Gastrocnemius medialis (tissue), 4 donors: ENCODE measurements at regions of chr5 and their contacts with region 1.

Region 1: GRCh38 chr5:138575194-138576015 is at the start of gene HSPA9:
- DNase-seq: peak; percentile 98 to 99
- ATAC-seq: peak; percentile 95 to 96
- H3K4me3 ChIP-seq: peak within 1 kb of the TSS; percentile 79 to 97 (median 91)
- H3K27ac ChIP-seq: peak within 1 kb of the TSS; percentile 97 to 99 (median 98)
- H3K4me1 ChIP-seq: peaks cover 12 to 22% of the 10 kb centered on the region in 2 donors
- H3K27me3 ChIP-seq: no peaks in the 10 kb centered on the region
- CTCF ChIP-seq: peak in 3 of 5 experiments; percentile 27 to 61 (median 42)
- POLR2A ChIP-seq: peak; percentile 95 to 98
- total RNA-seq, gene HSPA9: 449 to 840 (median 569) TPM

Region 2: GRCh38 chr5:137754126-137754960 is 821.1 kb before region 1 on chr5 and contains the start of gene HNRNPA0:
- in situ Hi-C with region 1: no loop called
- intact Hi-C with region 1: loop called (anchors 5 kb)
- DNase-seq: peak; percentile 96 to 97
- ATAC-seq: peak; percentile 92 to 95
- H3K4me3 ChIP-seq: peak within 1 kb of the TSS; percentile 80 to 98 (median 96)
- H3K27ac ChIP-seq: peak within 1 kb of the TSS; percentile 98 to 100 (median 100)
- H3K4me1 ChIP-seq: peaks cover 28 to 31% of the 10 kb centered on the region in 2 donors
- H3K27me3 ChIP-seq: no peaks in the 10 kb centered on the region
- CTCF ChIP-seq: peak in 2 of 5 experiments; percentile 19 to 26
- POLR2A ChIP-seq: peak; percentile 96 to 99
- total RNA-seq, gene HNRNPA0: 4.2 to 6.0 (median 5.2) TPM

Region 3: GRCh38 chr5:138542956-138543729 is 32.3 kb before region 1 on chr5 and contains the start of gene ETF1:
- in situ Hi-C with region 1: no loop called
- intact Hi-C with region 1: loop called (anchors 1 kb)
- DNase-seq: peak; percentile 100
- ATAC-seq: peak; percentile 86 to 87
- H3K4me3 ChIP-seq: peak within 1 kb of the TSS; percentile 85 to 98 (median 96)
- H3K27ac ChIP-seq: peak within 1 kb of the TSS; percentile 97 to 100 (median 98)
- H3K4me1 ChIP-seq: peaks cover 72 to 73% of the 10 kb centered on the region in 2 donors
- H3K27me3 ChIP-seq: no peaks in the 10 kb centered on the region
- CTCF ChIP-seq: peak in 1 of 5 experiments; percentile 17
- POLR2A ChIP-seq: peak; percentile 100
- total RNA-seq, gene ETF1: 99.9 to 139 (median 117) TPM

Region 4: DNA sequence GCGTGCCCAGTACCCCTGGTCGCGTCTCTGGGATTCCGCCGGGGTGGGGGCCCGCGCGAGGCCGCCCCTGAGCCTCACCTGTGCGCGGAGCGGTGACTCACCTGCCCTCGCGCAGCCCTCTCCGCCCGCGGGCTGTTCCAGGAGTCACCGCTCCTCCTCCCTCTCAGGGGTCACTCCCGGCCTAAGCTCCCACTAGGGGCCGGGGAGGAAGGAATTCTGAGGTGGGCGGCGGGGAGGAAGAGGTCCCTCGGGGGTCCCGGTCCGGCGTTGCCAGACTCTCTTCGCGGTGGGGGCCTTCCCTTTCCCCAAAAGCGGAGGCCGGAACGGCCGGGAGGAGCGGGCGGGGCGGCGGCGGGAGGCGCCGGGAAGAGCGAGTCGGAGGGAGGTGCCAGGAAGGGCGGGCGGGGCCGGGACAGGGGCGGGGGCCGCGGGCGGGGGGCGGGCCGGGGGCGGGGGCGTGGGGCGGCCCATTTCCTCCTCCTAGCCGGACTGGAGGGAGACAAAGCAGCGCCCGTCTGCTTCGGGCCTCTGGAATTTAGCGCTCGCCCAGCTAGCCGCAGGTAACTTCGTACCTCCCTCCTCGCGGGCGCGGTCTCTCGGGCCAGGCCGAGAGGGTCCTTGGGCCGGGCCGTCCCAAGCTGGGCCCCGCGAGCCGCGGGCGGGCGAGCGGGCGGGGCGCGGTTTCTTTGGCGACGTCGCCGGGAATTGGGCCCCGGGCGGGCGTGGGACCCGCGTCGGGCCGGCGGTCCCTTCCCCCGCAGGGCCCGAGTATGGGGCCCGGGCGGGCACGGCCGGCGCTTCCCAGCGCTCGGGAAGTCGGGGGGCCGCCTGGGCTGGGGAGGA is 177.8 kb after region 1 on chr5 and contains the start of gene CTNNA1:
- in situ Hi-C with region 1: no loop called
- intact Hi-C with region 1: loop called (anchors 2 kb)
- DNase-seq: peak; percentile 66 to 80
- ATAC-seq: peak; percentile 85 to 87
- H3K4me3 ChIP-seq: peak within 1 kb of the TSS; percentile 75 to 94 (median 79)
- H3K27ac ChIP-seq: peak within 1 kb of the TSS; percentile 87 to 100 (median 96)
- H3K4me1 ChIP-seq: peaks cover 13 to 22% of the 10 kb centered on the region in 2 donors
- H3K27me3 ChIP-seq: no peaks in the 10 kb centered on the region
- CTCF ChIP-seq: peak in 1 of 5 experiments; percentile 11
- POLR2A ChIP-seq: peak; percentile 76 to 84
- total RNA-seq, gene CTNNA1: 92.6 to 164 (median 114) TPM

Region 5: DNA sequence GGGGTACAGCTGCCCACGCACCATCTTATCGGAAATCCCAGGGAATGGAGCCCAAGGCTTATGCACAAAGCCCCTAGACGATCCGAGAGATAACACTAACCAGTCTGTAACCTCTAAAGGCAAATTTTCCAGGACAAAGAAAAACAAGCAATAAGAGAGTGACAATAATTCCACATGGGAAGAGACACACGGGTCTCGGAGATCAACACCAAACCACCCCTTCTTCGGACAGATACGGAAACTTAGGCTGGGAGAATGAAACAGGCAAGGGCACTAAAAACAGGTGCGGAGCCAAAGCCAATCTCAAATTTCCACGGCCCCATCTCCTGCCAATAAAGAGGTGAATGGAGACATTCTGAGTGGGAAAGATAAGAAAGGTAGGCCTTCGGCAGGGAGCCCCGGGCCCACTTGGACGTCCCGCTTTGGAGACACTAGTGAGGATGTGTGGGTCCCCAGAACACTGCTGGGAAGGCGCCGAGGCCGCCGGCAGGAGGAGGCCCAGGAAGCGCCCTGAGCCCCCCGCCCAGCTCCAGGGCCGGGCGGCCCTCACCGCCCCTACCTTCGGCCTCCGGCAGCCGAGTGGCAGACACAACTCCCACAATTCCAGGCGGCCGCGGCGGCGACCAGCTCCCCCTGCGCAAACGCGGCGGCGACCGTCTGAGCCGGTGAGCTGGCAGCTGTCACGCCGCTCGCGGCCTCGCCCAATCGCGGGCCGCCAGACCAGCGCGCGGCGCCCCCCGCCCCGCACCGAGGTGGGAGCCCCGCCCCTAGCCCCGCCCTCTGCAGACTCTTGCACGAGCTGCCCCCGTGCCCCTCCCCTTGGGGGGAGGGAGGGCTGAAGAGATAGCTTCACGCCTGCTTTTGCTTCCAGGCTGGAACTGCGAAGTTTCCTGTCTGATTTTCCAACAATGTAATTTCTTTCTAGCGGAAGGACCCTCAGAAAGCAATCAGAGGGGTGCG is 622.6 kb after region 1 on chr5 and contains the start of gene SIL1:
- in situ Hi-C with region 1: no loop called
- intact Hi-C with region 1: loop called (anchors 1 kb)
- DNase-seq: peak; percentile 95 to 97
- ATAC-seq: peak; percentile 91 to 93
- H3K4me3 ChIP-seq: peak within 1 kb of the TSS; percentile 78 to 89 (median 83)
- H3K27ac ChIP-seq: peak within 1 kb of the TSS; percentile 94 to 98 (median 97)
- H3K4me1 ChIP-seq: peaks cover 11 to 16% of the 10 kb centered on the region in 2 donors
- H3K27me3 ChIP-seq: no peaks in the 10 kb centered on the region
- CTCF ChIP-seq: peak in 1 of 5 experiments; percentile 13
- POLR2A ChIP-seq: peak; percentile 99
- total RNA-seq, gene SIL1: 36.6 to 52.6 (median 48.2) TPM

Region 6: DNA sequence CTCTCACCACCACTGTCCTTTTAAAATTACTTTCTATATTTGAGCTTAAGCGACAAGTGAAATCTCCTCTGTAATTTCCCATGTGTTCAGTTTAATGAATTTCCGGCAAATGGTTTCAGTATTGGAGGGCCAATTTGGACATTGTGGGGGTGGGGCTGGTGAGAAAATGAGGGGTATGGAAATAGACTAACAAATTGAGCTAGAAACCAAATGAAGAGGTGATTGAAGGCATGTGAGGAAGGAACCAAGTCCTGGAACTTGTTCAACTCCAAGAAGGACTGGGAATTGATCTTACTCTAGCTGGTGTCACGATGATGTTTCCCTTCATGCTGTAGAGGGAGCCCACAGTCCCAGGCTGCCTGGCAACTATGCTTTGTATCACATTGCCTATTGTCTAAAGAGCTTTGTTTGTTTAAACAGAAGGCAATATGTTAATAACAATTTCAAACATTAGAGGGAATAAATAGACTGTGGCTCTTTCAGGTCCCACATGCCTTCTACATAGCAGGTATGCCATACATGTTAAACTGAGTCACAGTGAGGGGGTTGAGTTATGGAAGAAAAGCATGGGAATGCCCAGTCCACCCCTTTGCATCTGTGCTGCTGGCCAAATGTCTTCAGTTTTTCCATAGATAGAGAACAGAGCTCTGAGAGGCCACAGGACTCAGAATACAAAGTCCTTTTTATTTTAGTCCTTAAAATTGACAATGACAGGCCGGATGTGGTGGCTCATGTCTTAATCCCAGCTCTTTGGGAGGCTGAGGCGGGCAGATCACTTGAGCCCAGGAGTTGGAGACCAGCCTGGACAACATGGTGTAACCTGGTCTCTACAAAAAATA is 693.2 kb after region 1 on chr5:
- in situ Hi-C with region 1: loop called (anchors 5 to 25 kb)
- intact Hi-C with region 1: loop called (anchors 1 kb)
- DNase-seq: no peak
- ATAC-seq: no peak
- H3K4me3 ChIP-seq: peak overlapping the region in 2 of 4 donors; percentile 9 to 10
- H3K27ac ChIP-seq: peak overlapping the region; percentile 92 to 98 (median 97)
- H3K4me1 ChIP-seq: peaks cover 41 to 46% of the 10 kb centered on the region in 2 donors
- H3K27me3 ChIP-seq: no peaks in the 10 kb centered on the region
- CTCF ChIP-seq: peak in 1 of 5 experiments; percentile 6
- POLR2A ChIP-seq: no peak

Region 7: DNA sequence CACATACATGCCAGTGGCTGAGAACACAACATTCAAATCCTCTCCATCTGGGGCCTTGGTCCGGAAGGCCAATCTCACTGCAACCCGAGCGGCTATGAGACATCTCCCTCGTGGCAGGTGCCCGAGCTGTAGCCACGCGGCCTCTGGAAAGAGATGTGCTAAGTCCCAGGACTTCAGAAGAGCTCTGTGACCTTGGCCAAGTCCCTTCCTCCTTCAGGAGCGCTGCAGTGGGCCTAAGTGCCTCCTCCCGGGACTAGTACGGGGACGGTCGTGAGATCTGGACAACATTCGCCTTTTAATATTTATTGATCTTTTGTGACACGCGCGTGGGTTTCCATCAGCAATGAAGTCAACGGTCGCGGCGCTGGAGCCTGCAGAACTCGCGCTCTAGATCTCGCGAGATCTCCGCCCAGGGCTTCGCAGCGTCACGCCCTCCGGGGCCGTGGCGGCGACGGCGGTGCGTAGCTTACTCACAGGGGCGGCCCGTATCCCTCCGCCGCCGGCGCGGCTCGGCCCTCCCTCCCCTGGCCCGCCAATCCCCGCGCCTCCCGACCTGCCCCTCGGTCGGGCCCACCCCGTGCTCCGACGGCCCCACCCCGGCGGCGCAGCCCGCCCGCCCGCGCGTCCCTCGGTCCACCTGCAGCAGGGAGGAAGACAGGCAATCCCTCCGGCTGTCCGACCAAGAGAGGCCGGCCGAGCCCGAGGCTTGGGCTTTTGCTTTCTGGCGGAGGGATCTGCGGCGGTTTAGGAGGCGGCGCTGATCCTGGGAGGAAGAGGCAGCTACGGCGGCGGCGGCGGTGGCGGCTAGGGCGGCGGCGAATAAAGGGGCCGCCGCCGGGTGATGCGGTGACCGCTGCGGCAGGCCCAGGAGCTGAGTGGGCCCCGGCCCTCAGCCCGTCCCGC is 985.6 kb after region 1 on chr5 and contains the start of gene UBE2D2:
- in situ Hi-C with region 1: no loop called
- intact Hi-C with region 1: loop called (anchors 1 kb)
- DNase-seq: peak; percentile 93 to 96
- ATAC-seq: peak; percentile 84
- H3K4me3 ChIP-seq: peak within 1 kb of the TSS; percentile 77 to 94 (median 88)
- H3K27ac ChIP-seq: peak within 1 kb of the TSS; percentile 92 to 99 (median 97)
- H3K4me1 ChIP-seq: peaks cover 41 to 42% of the 10 kb centered on the region in 2 donors
- H3K27me3 ChIP-seq: no peaks in the 10 kb centered on the region
- CTCF ChIP-seq: peak in 1 of 5 experiments; percentile 9
- POLR2A ChIP-seq: peak; percentile 91 to 93
- total RNA-seq, gene UBE2D2: 98.5 to 199 (median 131) TPM